WTC11 (cell line): ENCODE measurements at regions of chr6 and their contacts with region 1.

Region 1: DNA sequence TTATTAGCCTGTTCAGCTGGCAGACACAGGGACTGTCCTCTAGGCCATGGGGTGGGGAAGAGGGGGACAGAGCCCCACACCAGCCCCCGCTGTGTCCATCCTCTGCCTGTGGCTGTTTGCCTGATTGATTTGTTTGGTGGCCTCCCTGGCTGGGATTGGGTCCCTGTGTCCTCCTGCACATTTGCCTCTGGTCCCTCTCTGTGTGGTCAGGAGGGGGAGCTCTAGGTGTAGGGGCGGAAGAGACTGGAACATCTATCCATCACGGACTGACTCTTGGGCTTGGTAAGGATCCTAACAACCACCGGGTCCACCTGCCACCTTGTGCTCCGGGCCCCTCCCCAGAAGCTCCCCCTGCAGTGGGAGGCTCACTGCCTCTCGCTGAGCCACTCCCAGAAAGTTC is 38.4 kb upstream of the CCDC167 start:
- DNase-seq: peak; percentile 63
- ATAC-seq: peak; percentile 56
- H3K4me3 Mint-ChIP-seq: peak overlapping the region; percentile 8; the same call in 1 of the 2 replicates
- H3K27ac Mint-ChIP-seq: no peak overlapping the region
- H3K4me1 Mint-ChIP-seq: peaks cover 37% of the 10 kb centered on the region
- H3K27me3 Mint-ChIP-seq: peaks cover 59% of the 10 kb centered on the region
- CTCF ChIP-seq: 0 out of 2 replicates have a peak, but pooled peaks have one; percentile 20

Region 2: GRCh38 chr6:37489660-37490361 is 48.3 kb before region 1 on chr6:
- CTCF ChIA-PET with region 1: interaction called, 20 read pairs
- POLR2A ChIA-PET with region 1: interaction called, 4 read pairs
- DNase-seq: no peak
- ATAC-seq: peak; percentile 16
- H3K4me3 Mint-ChIP-seq: no peak overlapping the region
- H3K27ac Mint-ChIP-seq: no peak overlapping the region; the same call in 1 of the 2 replicates
- H3K4me1 Mint-ChIP-seq: peaks cover 45% of the 10 kb centered on the region
- H3K27me3 Mint-ChIP-seq: no peaks in the 10 kb centered on the region
- CTCF ChIP-seq: no peak

Region 3: DNA sequence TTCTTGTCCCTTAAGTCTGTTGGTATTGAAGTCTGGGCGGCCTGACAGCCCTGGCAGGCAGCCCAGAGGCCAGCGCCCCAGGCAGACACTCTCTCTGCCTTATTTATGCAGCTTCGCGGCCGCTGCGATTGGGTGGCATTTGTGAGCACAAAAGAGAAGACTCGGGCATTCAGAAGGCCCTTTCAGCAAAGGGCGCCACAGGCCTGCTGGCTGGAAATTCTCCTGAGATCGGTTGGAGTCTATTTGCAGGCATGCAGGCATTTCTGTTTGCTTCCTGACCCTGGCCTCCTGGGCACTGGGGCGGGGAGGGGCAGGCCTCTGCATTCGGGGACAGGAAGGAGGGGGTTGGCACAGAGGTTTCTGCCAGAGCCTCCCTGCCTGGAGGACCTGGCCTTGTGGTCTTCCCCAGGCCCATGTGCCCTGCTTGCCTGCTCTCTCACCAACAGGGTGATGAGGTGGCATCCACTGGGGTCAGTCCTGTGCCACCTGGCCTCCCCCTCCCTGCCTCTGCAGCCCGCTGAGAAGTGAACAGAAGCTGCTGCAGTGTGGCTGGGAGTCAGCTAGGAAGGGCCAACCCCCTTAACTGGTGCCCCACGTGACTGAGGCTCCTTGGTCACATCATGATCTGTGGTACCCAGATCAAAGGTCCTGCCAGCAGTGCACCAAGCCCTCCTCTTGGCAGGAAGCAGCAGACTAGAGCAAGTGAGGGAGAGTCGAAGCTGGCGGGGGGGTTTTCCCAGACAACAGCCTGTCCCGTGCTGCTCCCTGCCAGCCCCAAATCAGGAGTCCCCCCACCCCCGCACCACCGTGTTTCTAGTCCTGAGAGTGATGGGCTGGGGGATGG is 21.8 kb before region 1 on chr6:
- CTCF ChIA-PET with region 1: interaction called, 18 read pairs
- POLR2A ChIA-PET with region 1: interaction called, 4 read pairs
- DNase-seq: peak; percentile 28
- ATAC-seq: peak; percentile 13
- H3K4me3 Mint-ChIP-seq: 0 out of 2 replicates have a peak overlapping the region, but pooled peaks have one; percentile 14
- H3K27ac Mint-ChIP-seq: no peak overlapping the region
- H3K4me1 Mint-ChIP-seq: peaks cover 61% of the 10 kb centered on the region
- H3K27me3 Mint-ChIP-seq: peaks cover 43% of the 10 kb centered on the region
- CTCF ChIP-seq: no peak

Region 4: GRCh38 chr6:37554480-37554819 is 16.3 kb after region 1 on chr6:
- CTCF ChIA-PET with region 1: interaction called, 82 read pairs
- POLR2A ChIA-PET with region 1: interaction called, 5 read pairs
- DNase-seq: no peak
- ATAC-seq: no peak
- H3K4me3 Mint-ChIP-seq: no peak overlapping the region
- H3K27ac Mint-ChIP-seq: no peak overlapping the region
- H3K4me1 Mint-ChIP-seq: peaks cover 8% of the 10 kb centered on the region
- H3K27me3 Mint-ChIP-seq: peaks cover 6% of the 10 kb centered on the region
- CTCF ChIP-seq: no peak

Region 5: DNA sequence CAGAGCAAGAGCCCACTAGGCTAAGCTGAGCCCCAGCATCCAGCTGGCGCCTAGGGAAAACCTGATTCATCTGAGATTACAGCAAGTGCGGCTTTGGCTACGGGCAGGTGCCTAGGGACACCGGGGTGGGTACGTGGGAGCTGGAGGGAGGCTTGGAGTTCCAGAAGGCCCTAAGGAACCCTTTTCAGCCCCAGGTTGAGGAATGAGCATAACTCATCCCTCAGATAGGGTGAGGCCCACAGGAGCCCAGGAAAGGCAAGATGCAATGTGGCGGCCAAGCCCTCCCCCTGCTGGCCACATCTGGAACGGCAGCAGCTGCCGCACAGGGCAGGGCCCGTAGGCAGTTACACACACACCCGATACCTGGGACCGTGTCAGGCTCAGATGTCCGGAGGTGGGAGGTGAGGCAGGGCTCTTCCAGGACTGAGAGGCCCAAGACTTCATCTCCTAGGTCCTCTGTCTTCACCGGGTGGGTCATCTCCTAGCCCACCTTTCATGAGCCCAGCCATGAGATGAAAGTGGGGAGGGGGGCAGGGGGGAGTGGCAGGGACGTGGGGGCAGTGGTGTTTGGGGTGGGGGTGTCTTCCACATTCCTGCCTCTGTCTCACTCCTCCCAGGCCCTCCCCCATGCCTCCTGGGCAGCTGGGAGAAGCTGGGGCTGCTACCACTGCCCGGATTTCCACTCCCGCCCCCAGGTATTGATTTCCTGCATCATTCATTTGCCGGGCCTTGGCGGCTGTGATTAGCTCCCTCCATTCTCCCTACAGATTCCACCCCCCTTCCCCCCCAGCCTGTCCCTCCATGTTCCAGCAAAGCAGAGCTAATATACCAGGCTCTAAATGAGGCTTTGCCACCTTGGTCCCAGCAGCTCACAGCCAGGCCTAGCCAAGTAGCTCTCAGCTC is 154.0 kb after region 1 on chr6:
- CTCF ChIA-PET with region 1: interaction called, 13 read pairs
- POLR2A ChIA-PET with region 1: no interaction called
- DNase-seq: peak; percentile 92
- ATAC-seq: peak; percentile 92
- H3K4me3 Mint-ChIP-seq: no peak overlapping the region
- H3K27ac Mint-ChIP-seq: no peak overlapping the region
- H3K4me1 Mint-ChIP-seq: peaks cover 13% of the 10 kb centered on the region
- H3K27me3 Mint-ChIP-seq: peaks cover 53% of the 10 kb centered on the region
- CTCF ChIP-seq: peak; percentile 99